ENCODE measurements at regions of chr17 and their contacts with region 1.

Region 1: GRCh38 chr17:79082311-79083190 is 7.9 kb downstream of the ENGASE start:
- DNase-seq: peak; percentile 73
- ATAC-seq: peak; percentile 66
- H3K4me3 ChIP-seq: no peak overlapping the region
- H3K27ac ChIP-seq: no peak overlapping the region
- H3K4me1 ChIP-seq: no peaks in the 10 kb centered on the region
- H3K27me3 ChIP-seq: no peaks in the 10 kb centered on the region
- CTCF ChIP-seq: peak; percentile 98

Region 2: GRCh38 chr17:79019632-79020584 is 62.6 kb before region 1 on chr17:
- CTCF ChIA-PET with region 1: no interaction called
- POLR2A ChIA-PET with region 1: no interaction called
- intact Hi-C with region 1: loop called (anchors 1 kb)
- DNase-seq: peak; percentile 86
- ATAC-seq: peak; percentile 55
- H3K4me3 ChIP-seq: no peak overlapping the region
- H3K27ac ChIP-seq: no peak overlapping the region
- H3K4me1 ChIP-seq: peaks cover 22% of the 10 kb centered on the region
- H3K27me3 ChIP-seq: no peaks in the 10 kb centered on the region
- CTCF ChIP-seq: peak; percentile 99

Region 3: DNA sequence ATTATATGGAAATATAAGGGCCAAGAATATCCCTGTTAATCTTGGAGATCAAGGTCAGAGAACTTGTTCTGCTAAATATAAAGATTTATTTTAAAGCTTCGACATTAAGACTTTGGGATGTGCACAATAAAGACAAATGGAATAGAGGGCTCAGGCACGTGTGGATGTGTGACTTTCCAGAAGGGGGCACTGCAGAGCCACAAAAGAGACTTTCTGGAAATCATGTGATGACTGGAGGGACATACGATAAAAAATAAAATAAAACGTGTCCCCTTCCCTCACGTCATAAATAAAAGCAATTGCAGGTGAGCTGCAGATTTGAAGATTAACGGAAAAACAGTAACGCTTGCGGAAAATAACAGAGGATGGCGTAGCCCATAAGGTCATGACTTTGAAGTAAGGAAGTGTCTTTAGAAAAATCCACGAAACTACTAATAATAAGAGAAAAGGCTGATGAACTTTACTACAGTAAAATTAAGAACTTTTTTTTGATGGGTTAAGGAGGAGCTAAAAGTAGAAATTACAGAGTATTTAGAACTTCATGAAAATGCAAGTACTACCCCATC is 17.4 kb before region 1 on chr17:
- CTCF ChIA-PET with region 1: interaction called, 3 read pairs
- POLR2A ChIA-PET with region 1: interaction called, 3 read pairs
- intact Hi-C with region 1: loop called (anchors 1 kb)
- DNase-seq: peak; percentile 78
- ATAC-seq: peak; percentile 63
- H3K4me3 ChIP-seq: no peak overlapping the region
- H3K27ac ChIP-seq: no peak overlapping the region
- H3K4me1 ChIP-seq: no peaks in the 10 kb centered on the region
- H3K27me3 ChIP-seq: no peaks in the 10 kb centered on the region
- CTCF ChIP-seq: peak; percentile 85

Region 4: GRCh38 chr17:79789534-79790353 is 707.2 kb after region 1 on chr17:
- CTCF ChIA-PET with region 1: no interaction called
- POLR2A ChIA-PET with region 1: no interaction called
- intact Hi-C with region 1: no loop called
- DNase-seq: peak; percentile 65
- ATAC-seq: peak; percentile 70
- H3K4me3 ChIP-seq: peak overlapping the region; percentile 67
- H3K27ac ChIP-seq: no peak overlapping the region
- H3K4me1 ChIP-seq: peaks cover 8% of the 10 kb centered on the region
- H3K27me3 ChIP-seq: peaks cover 9% of the 10 kb centered on the region; the same call in 1 of the 2 replicates
- CTCF ChIP-seq: peak; percentile 92

Measured in PC-3 (cell line).